HepG2 (cell line): ENCODE measurements at regions of chr3 and their contacts with region 1.

Region 1: DNA sequence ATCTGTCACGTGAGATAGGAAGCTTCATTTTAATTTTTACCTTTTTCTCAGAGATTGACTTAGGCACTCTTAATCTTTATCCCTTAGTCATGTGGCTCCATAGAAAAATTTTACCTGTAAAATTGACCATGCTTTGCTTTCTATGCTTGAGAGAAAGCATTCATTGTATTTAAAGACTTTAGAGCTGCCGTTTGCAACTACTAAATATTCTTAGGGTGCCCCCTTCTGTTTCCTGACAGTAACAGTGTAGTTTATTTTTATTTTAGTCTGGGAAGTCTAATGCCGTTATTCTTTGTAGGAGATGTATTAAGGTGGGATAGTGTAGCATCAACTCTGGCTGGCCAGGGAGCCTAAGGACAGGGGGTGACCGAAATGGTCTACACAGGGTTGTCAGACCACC is 84.5 kb upstream of the SYNPR start:
- DNase-seq: peak; percentile 6
- ATAC-seq: no peak
- H3K4me3 ChIP-seq: no peak overlapping the region
- H3K27ac ChIP-seq: no peak overlapping the region
- H3K4me1 ChIP-seq: no peaks in the 10 kb centered on the region
- H3K27me3 ChIP-seq: no peaks in the 10 kb centered on the region
- CTCF ChIP-seq: peak; percentile 54
- EP300 ChIP-seq: no peak
- POLR2A ChIP-seq: no peak
- RAD21 ChIP-seq: no peak

Region 2: GRCh38 chr3:62611562-62612240 is 581.9 kb before region 1 on chr3:
- CTCF ChIA-PET with region 1: no interaction called
- POLR2A ChIA-PET with region 1: no interaction called
- in situ Hi-C with region 1: no loop called
- intact Hi-C with region 1: no loop called
- DNase-seq: no peak
- ATAC-seq: no peak
- H3K4me3 ChIP-seq: no peak overlapping the region
- H3K27ac ChIP-seq: no peak overlapping the region
- H3K4me1 ChIP-seq: no peaks in the 10 kb centered on the region
- H3K27me3 ChIP-seq: peaks cover 0 to 1% of the 10 kb centered on the region in 2 experiments; a peak in 1 of 5 replicates
- CTCF ChIP-seq: no peak
- EP300 ChIP-seq: no peak
- POLR2A ChIP-seq: no peak
- RAD21 ChIP-seq: no peak

Region 3: DNA sequence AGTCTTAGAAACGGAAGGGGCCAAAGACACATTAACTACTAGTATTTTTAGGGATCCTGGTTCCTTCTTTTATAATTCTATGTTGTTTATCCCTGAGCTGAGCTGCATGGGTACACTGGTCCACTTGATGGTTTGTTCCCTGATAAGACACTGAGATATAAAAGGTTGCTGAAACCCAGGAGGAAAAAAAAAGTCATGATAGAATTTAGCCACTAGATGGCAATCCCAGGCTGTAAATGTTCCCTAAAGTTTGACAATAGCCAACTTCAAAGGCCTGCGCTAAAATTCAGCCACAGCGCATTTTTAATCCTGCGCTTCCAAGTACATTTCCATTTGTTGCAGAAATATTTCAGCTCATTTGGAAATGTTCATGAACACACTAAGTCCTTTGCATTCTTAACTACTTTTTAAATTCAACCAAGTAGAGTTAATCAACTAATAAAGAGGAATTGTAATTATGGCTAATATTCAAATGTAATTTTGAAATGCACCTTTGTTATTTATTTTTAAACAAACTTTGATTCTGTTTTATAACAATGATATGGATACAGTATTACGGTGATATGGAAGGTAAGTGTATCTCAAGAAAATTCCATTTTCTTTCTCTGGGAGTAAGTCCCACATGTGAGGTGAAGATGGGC is 571.0 kb before region 1 on chr3:
- CTCF ChIA-PET with region 1: interaction called, 13 read pairs
- POLR2A ChIA-PET with region 1: no interaction called
- in situ Hi-C with region 1: no loop called
- intact Hi-C with region 1: loop called (anchors 1 kb)
- DNase-seq: peak; percentile 48
- ATAC-seq: peak; percentile 30; the same call in 2 of the 3 replicates
- H3K4me3 ChIP-seq: no peak overlapping the region
- H3K27ac ChIP-seq: no peak overlapping the region
- H3K4me1 ChIP-seq: no peaks in the 10 kb centered on the region
- H3K27me3 ChIP-seq: no peaks in the 10 kb centered on the region
- CTCF ChIP-seq: peak; percentile 64
- EP300 ChIP-seq: no peak
- POLR2A ChIP-seq: no peak
- RAD21 ChIP-seq: peak; percentile 22; the same call in 1 of the 2 replicates

Region 4: DNA sequence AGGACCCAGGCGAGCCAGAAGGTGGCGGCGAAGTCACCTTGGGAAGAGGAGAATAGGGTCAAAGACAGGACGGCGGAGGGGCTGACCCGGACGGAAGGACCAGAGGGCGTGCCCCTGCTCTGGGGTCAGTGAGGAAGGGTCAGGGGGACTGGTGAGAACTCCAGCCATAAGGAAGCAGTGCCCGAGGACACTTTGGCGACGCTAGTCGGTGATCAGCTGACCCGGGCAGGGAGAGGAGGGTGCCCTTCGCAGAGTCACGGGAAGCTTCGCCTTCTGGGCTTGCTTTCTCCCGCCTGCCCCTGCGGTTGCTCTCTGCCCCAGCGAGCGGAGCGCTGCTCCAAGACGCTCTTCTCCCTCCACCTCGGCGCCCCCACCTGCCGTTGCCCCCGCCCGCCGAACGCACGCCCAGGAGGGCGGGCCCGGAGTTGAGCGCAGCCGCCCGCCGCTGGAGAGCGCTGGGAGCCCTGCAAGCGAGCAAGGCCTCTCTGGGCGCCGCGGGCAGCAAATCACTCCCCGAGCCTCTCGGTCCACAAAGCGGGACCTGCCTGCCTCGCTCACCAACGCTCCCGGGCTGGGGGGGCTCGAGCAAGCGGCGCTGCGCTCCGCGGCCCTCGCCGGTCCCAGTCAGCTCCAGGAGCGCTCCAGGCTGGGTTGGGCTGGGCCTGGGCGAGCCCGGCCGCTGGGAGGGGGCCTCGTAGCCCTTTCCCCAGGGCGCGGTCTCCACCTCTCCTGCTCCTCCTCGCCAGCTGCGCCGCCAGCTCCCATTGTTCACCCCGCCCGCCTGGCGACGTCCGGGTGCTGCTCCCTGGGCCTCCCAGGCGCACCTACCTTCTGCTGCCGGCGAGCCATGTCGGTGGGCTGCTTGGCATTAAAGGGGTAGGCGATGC is 319.6 kb before region 1 on chr3:
- CTCF ChIA-PET with region 1: no interaction called
- POLR2A ChIA-PET with region 1: no interaction called
- in situ Hi-C with region 1: no loop called
- intact Hi-C with region 1: loop called (anchors 10 kb)
- DNase-seq: no peak
- ATAC-seq: peak; percentile 85
- H3K4me3 ChIP-seq: no peak overlapping the region
- H3K27ac ChIP-seq: no peak overlapping the region
- H3K4me1 ChIP-seq: no peaks in the 10 kb centered on the region
- H3K27me3 ChIP-seq: no peaks in the 10 kb centered on the region; a peak in 1 of 5 replicates
- CTCF ChIP-seq: peak; percentile 51
- EP300 ChIP-seq: no peak
- POLR2A ChIP-seq: no peak
- RAD21 ChIP-seq: no peak

Region 5: GRCh38 chr3:63228087-63229023 is 34.7 kb after region 1 on chr3:
- CTCF ChIA-PET with region 1: no interaction called
- POLR2A ChIA-PET with region 1: no interaction called
- in situ Hi-C with region 1: no loop called
- intact Hi-C with region 1: loop called (anchors 1 kb)
- DNase-seq: peak; percentile 16
- ATAC-seq: peak; percentile 66
- H3K4me3 ChIP-seq: no peak overlapping the region
- H3K27ac ChIP-seq: no peak overlapping the region
- H3K4me1 ChIP-seq: no peaks in the 10 kb centered on the region
- H3K27me3 ChIP-seq: no peaks in the 10 kb centered on the region; a peak in 1 of 5 replicates
- CTCF ChIP-seq: peak; percentile 56
- EP300 ChIP-seq: no peak
- POLR2A ChIP-seq: no peak
- RAD21 ChIP-seq: no peak